Activated CD4-positive, alpha-beta T cell treated with anti-CD3 and anti-CD28 coated beads for 36 hours (primary cell): ENCODE measurements at regions of chr11 and their contacts with region 1.

Region 1: DNA sequence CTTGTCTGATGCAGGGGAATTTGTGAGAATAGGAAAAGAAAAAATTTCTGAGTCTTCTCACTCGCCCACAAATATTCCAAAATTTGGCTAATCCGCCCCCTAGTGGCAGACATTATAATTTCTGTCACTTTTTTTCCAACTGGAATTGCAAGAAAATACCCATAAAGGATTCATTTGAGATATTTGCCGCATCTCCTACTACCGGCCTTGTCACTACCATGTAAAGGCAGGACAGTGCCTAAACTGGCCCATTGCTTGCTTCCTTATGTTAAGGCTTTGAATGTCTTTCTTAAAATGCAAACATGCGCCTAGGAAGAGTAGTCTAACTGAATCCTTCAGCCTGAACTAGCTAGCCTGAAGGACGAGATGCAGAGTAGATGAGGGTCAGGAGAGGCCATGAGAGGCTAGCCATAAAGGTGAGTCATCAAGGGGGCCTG is 9.3 kb upstream of the CEP295 start:
- DNase-seq: peak; percentile 22
- ATAC-seq: no peak
- H3K4me3 Mint-ChIP-seq: no peak overlapping the region
- H3K27ac Mint-ChIP-seq: no peak overlapping the region
- H3K4me1 Mint-ChIP-seq: peaks cover 12% of the 10 kb centered on the region
- H3K27me3 Mint-ChIP-seq: peaks cover 5% of the 10 kb centered on the region

Region 2: GRCh38 chr11:93234602-93235207 is 417.5 kb before region 1 on chr11:
- CTCF ChIA-PET with region 1: interaction called, 12 read pairs
- POLR2A ChIA-PET with region 1: no interaction called
- intact Hi-C with region 1: loop called (anchors 1 kb)
- DNase-seq: peak; percentile 82
- ATAC-seq: peak; percentile 99
- H3K4me3 Mint-ChIP-seq: no peak overlapping the region
- H3K27ac Mint-ChIP-seq: no peak overlapping the region
- H3K4me1 Mint-ChIP-seq: no peaks in the 10 kb centered on the region
- H3K27me3 Mint-ChIP-seq: peaks cover 9% of the 10 kb centered on the region

Region 3: DNA sequence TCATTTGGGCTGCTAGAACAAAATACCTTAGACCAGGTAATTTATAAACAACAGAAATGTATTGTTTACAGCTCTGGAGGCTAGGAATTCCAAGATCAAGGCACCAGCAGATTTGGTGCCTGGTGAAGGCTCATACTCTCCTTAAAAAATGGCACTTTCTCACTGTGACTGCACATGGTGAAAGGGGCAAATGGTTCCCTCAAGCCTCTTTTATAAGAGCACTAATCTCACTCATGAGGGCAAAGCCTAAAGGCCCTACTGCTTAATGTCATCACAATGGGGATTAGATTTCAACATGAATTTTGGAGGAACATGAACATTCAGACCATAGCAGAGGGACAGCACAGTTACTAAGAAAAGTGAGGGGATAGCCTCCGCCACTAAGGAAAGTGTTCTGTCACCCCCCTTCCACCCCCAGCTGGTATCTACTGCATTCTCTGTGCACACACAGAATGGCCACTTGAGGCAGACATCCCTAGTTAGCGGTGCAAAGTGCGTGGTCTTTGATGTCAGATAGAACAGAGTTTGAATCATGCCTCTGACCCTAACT is 37.9 kb before region 1 on chr11:
- CTCF ChIA-PET with region 1: interaction called, 5 read pairs
- POLR2A ChIA-PET with region 1: no interaction called
- intact Hi-C with region 1: loop called in 1 of 2 experiments (anchors 5 kb)
- DNase-seq: peak; percentile 54
- ATAC-seq: peak; percentile 81
- H3K4me3 Mint-ChIP-seq: no peak overlapping the region
- H3K27ac Mint-ChIP-seq: no peak overlapping the region
- H3K4me1 Mint-ChIP-seq: no peaks in the 10 kb centered on the region
- H3K27me3 Mint-ChIP-seq: peaks cover 2% of the 10 kb centered on the region